A673 (cell line): ENCODE measurements at regions of chr9 and their contacts with region 1.

Region 1: DNA sequence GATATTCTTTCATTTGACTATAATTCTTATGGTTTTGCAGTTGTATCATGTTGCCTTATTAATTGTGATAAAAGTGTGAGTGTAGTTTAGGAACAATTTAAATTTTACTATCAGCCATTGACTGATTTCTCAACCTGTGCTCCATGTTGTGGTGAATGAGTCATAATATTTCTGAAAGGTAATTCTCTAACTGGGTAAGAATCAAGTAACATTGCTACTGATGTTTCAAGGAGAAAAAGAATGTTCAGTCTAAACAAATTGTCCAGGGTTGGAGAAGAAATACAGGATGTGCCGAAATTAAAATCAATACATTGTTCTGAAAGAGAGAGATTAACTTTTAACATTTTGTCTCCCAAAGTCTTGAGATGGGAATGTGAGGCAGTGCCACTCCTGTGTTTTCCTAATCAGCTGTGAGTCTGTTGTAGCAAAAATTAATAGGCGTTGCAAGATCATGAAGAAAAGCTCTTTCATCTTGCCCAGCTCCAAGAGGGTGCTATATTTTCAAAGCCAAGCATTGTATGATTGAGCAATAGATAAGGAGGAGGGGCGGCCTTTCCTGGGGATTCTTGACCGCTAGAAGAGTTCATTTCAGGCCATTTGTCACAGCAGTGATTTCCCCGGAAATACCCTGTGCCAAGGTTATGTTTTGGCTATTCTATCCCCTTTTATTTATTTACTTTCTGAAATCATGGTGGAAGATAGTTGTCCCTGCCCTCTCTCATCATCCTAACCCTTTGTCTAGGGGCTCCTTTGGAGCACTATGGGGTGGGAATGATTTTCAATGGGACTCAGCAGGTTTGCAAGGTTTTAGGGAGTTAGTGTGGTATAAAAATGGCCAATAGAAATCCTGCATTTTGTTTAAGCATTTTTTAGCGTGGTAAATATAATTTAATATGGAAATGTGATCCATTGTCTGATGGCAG is 151.6 kb downstream of the FOCAD start:
- DNase-seq: no peak
- H3K4me3 ChIP-seq: no peak overlapping the region
- H3K27ac ChIP-seq: no peak overlapping the region
- H3K4me1 ChIP-seq: no peaks in the 10 kb centered on the region
- H3K27me3 ChIP-seq: no peaks in the 10 kb centered on the region
- CTCF ChIP-seq: no peak

Region 2: DNA sequence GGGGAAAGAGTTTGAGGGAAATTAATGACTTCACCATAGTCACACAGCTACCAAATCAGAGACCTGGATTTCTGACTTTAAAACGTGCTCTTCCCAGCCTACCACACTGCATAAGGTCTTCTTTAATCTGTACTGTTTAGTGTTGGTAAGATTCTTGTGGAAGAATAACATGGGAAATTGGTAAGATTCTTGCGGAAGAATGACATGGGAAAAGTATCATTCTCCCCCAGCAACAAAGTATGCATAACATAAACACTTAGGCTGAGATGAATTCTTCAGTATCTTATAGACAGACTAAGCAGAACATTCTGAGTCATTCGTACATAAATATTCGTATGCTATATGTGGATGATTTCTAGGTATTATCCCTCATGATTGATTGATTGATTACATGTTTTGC is 18.8 kb after region 1 on chr9:
- CTCF ChIA-PET with region 1: no interaction called
- POLR2A ChIA-PET with region 1: no interaction called
- intact Hi-C with region 1: loop called (anchors 2 kb)
- DNase-seq: no peak
- H3K4me3 ChIP-seq: no peak overlapping the region
- H3K27ac ChIP-seq: no peak overlapping the region
- H3K4me1 ChIP-seq: peaks cover 5% of the 10 kb centered on the region
- H3K27me3 ChIP-seq: no peaks in the 10 kb centered on the region
- CTCF ChIP-seq: no peak

Region 3: DNA sequence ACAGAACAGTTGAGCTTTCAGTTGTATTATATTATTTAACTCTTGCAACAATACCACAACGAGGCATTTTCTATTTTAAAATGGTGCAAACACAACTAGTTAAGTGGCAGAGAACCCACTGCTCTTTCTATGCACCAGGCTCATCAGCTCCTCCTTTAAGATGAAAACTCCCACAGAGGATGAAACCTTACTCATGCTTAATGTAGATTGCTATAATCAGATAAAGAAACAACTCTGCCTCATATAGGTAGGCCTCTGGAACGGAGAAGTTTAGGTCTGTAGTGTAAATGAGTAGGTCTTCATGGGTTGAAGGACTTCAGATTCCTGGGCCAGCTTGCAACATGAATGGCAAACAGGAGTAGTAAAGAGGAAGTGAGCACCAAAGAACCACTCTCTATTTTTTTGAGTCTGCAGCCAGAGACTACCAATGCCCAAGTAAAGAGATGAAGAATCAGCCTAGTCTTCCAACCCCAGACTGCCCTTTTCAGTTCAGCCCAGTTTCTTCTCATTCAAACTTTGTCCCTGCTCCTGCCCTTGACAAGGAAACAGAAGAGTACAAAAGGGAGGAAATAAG is 162.0 kb after region 1 on chr9:
- CTCF ChIA-PET with region 1: no interaction called
- POLR2A ChIA-PET with region 1: no interaction called
- intact Hi-C with region 1: no loop called
- DNase-seq: no peak
- H3K4me3 ChIP-seq: no peak overlapping the region
- H3K27ac ChIP-seq: no peak overlapping the region
- H3K4me1 ChIP-seq: no peaks in the 10 kb centered on the region
- H3K27me3 ChIP-seq: no peaks in the 10 kb centered on the region
- CTCF ChIP-seq: no peak